ENCODE measurements at regions of chr17 and their contacts with region 1.

Region 1: DNA sequence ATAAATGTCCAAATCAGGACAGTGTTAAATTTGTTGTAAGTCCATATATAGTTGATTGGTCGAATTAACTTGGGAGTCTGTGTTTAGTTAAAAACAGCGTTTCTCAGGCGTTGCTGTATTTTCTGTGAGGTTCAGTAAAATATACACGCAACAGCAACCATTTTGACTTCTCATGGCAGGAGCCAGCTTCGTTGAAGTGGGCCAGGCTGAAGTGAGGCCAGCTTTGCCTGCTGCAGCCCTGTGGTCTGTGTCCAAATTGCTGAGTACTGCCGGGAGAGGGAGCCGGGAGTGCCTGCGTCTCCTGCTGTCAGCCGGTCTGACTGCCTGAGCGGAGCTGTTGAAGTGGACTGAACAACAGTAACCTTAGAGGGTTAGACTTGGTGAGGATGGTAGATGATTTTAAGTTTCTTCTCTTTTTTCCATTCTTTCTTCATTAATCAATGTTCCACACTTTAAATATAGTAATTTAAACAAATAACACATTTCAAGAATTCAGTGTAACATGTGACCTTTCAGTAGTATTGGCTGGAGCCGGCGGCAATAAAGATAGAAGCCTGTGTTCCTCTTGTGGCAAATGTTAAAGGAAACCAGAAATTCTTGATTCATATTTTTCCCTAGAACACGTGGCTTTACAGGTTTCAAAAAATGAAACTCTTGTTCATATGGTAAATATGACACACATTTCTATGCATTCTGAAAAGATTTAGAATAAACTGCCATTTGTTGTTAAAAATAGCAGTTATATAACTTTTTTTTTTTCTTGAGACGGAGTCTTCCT is 37.0 kb upstream of the ZNF750 start:
- DNase-seq: peak; percentile 30 to 66 (median 58)
- H3K4me3 ChIP-seq: no peak overlapping the region
- H3K27ac ChIP-seq: no peak overlapping the region
- H3K4me1 ChIP-seq: peaks cover 8 to 44% (median 34%) of the 10 kb centered on the region in 4 experiments
- H3K27me3 ChIP-seq: peaks cover 0 to 5% (median 0%) of the 10 kb centered on the region in 5 experiments

Region 2: DNA sequence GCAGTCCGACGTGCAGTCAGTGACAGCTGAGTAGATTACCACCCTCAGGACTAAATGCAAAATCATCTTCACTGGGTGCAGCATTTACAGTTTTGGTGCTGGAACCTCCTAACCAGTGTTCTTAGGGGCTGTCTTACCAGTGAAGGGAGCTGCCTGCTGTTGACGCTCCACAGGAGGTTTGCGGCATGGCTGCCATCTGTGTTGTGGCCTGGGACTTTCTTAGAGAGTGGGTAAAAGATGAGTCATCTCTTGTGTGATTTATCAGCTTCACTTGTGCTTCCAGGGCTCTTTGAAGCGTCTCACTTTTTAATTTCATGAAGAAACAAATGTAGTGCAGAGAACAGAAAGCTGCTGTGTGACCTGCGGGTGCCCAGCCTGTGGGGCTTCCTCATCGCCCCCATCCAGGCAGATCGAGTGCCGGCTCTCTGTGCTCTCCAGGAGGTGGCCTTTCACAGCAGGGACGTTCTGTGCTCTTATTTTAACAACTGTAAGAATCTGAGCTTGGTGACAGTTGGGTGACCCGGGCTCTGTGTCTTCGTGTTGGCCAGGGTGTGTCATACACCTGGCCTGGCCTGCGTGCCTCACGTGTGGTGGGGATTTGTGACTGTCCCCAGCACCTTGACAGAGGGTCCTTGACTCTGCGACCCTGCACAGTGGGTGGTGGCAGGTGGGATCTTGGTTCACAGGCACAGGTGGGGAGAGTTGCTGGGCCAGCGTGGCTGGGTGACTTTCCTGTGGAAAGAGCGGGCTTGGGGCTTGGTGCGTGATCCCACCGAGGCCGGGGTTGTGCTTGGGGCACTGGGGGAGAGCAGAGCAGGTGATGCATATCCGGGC is 12.6 kb before region 1 on chr17:
- CTCF ChIA-PET with region 1: interaction called, 16 read pairs
- POLR2A ChIA-PET with region 1: interaction called, 4 read pairs
- DNase-seq: peak; percentile 73 to 96 (median 95)
- H3K4me3 ChIP-seq: no peak overlapping the region
- H3K27ac ChIP-seq: peak overlapping the region in 1 of 2 experiments; percentile 31
- H3K4me1 ChIP-seq: peaks cover 0 to 46% (median 43%) of the 10 kb centered on the region in 4 experiments
- H3K27me3 ChIP-seq: no peaks in the 10 kb centered on the region

Region 3: GRCh38 chr17:82917691-82918345 is 41.0 kb after region 1 on chr17:
- CTCF ChIA-PET with region 1: interaction called, 11 read pairs
- POLR2A ChIA-PET with region 1: no interaction called
- DNase-seq: peak; percentile 14 to 43 (median 40)
- H3K4me3 ChIP-seq: no peak overlapping the region
- H3K27ac ChIP-seq: no peak overlapping the region
- H3K4me1 ChIP-seq: peaks cover 0 to under 1% (median 0%) of the 10 kb centered on the region in 4 experiments
- H3K27me3 ChIP-seq: no peaks in the 10 kb centered on the region

Measured in common myeloid progenitor, CD34-positive (primary cell).